Right lobe of liver (tissue), 6 donors: ENCODE measurements at regions of chr22 and their contacts with region 1.

Region 1: DNA sequence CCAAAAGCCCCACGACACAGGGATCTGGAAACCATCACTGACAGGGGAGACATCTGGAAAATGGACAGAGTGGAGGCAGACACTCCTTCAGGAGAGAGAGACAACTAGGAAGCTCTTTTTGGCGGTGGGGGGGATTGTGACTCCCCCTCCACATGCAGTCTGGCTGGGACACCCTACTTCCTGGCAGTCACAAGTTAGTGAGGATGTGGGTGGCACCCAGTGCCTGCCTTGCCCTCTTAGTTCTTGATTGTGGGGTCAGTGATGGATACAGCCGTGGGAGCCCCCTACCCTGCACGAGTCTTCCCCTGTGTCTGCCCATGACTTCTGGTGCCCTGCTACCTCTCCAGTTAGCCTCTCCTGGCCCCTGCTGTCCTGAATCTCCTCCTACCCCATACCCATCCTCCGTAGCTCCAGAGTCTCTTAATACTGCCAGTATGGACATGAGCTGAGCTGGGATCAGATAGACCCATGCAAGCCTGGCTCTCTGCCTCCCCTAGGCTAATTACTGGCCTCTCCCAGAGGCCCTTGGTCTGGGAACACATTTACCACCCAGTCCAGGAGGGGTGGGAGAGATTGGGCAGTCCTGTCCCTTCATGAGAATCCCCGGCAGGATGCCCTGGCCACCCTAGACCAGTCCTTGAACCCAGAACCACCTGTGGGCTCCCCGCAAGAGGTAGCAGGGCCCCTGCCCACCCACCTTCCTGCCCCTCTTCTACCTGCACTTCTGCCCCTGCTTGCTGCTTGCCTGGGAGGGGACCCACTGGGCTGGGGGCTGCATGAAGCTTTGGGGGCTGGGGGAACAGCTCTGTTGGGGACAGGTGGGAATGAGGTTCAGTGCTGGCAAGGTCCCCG is 22.8 kb downstream of the RHBDD3 start:
- DNase-seq: no peak
- ATAC-seq: peak; percentile 8 to 14 (median 11)
- H3K4me3 ChIP-seq: no peak overlapping the region
- H3K27ac ChIP-seq: no peak overlapping the region
- H3K4me1 ChIP-seq: peaks cover 0 to 3% (median 0%) of the 10 kb centered on the region in 4 donors
- H3K27me3 ChIP-seq: no peaks in the 10 kb centered on the region
- CTCF ChIP-seq: no peak
- POLR2A ChIP-seq: no peak

Region 2: GRCh38 chr22:28639321-28639720 is 605.7 kb before region 1 on chr22:
- intact Hi-C with region 1: no loop called
- DNase-seq: no peak
- ATAC-seq: no peak
- H3K4me3 ChIP-seq: no peak overlapping the region
- H3K27ac ChIP-seq: no peak overlapping the region
- H3K4me1 ChIP-seq: no peaks in the 10 kb centered on the region
- H3K27me3 ChIP-seq: no peaks in the 10 kb centered on the region
- CTCF ChIP-seq: no peak
- POLR2A ChIP-seq: no peak

Region 3: GRCh38 chr22:29040385-29041275 is 204.4 kb before region 1 on chr22:
- intact Hi-C with region 1: no loop called
- DNase-seq: peak in 1 of 3 donors; percentile 71
- ATAC-seq: peak; percentile 73 to 83 (median 78)
- H3K4me3 ChIP-seq: no peak overlapping the region
- H3K27ac ChIP-seq: no peak overlapping the region
- H3K4me1 ChIP-seq: peaks cover 0 to 35% (median 0%) of the 10 kb centered on the region in 4 donors
- H3K27me3 ChIP-seq: no peaks in the 10 kb centered on the region
- CTCF ChIP-seq: peak; percentile 94 to 99 (median 96)
- POLR2A ChIP-seq: no peak

Region 4: DNA sequence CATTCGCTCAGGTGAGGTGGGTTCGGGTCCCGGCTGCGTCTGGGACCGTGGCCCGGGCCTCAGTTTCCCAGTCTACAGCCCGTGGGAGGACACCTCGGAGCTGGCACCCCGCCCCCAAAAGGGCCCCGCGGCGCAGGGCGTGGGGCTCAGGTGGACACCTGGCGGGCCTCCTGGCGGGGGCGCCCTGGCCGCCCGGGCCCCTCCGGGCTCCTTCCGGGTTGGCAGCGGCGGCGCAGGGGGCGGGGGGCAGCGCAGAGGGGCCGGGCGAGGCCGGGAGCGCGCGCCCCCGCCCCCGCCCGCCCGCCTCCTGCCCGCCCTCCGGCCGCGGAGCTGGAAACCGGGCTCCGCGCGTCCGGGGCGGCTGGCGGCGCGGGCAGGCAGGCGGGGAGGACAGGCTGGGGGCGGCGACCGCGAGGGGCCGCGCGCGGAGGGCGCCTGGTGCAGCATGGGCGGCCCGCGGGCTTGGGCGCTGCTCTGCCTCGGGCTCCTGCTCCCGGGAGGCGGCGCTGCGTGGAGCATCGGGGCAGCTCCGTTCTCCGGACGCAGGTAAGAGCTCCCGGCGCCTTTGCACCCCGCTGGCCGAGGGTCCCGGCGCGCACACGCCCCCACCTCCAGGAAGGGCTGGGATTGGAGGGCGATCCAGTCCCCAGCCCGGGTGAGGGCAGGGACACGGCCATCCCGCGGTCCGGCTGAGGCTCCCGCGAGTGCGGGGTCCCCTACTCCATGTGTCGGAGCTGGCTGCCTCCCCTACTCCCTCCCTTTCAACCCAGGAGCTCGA is 39.2 kb before region 1 on chr22 and contains the start of gene EMID1:
- intact Hi-C with region 1: loop called in 1 of 2 experiments (anchors 5 kb)
- DNase-seq: peak in 1 of 3 donors; percentile 62
- ATAC-seq: peak; percentile 53 to 64 (median 56)
- H3K4me3 ChIP-seq: peak within 1 kb of the TSS; percentile 50 to 53 (median 52)
- H3K27ac ChIP-seq: no peak within 1 kb of the TSS
- H3K4me1 ChIP-seq: peaks cover 0 to 3% (median 0%) of the 10 kb centered on the region in 4 donors
- H3K27me3 ChIP-seq: no peaks in the 10 kb centered on the region
- CTCF ChIP-seq: peak in 3 of 4 donors; percentile 15 to 42 (median 16)
- POLR2A ChIP-seq: no peak
- total RNA-seq, gene EMID1: 1.1 to 2.7 (median 1.5) TPM

Region 5: GRCh38 chr22:29369460-29369859 is 124.4 kb after region 1 on chr22:
- intact Hi-C with region 1: no loop called
- DNase-seq: peak in 2 of 3 donors; percentile 52 to 59
- ATAC-seq: peak; percentile 61 to 83 (median 75)
- H3K4me3 ChIP-seq: no peak overlapping the region
- H3K27ac ChIP-seq: no peak overlapping the region
- H3K4me1 ChIP-seq: peaks cover 0 to 8% (median 0%) of the 10 kb centered on the region in 4 donors
- H3K27me3 ChIP-seq: no peaks in the 10 kb centered on the region
- CTCF ChIP-seq: no peak
- POLR2A ChIP-seq: no peak